WTC11 (cell line): ENCODE measurements at regions of chr10 and their contacts with region 1.

Region 1: GRCh38 chr10:125006921-125007426 is 65.1 kb downstream of the ZRANB1 start:
- DNase-seq: no peak
- ATAC-seq: no peak
- H3K4me3 Mint-ChIP-seq: no peak overlapping the region
- H3K27ac Mint-ChIP-seq: peak overlapping the region; percentile 84
- H3K4me1 Mint-ChIP-seq: peaks cover 38% of the 10 kb centered on the region
- H3K27me3 Mint-ChIP-seq: no peaks in the 10 kb centered on the region
- CTCF ChIP-seq: no peak

Region 2: DNA sequence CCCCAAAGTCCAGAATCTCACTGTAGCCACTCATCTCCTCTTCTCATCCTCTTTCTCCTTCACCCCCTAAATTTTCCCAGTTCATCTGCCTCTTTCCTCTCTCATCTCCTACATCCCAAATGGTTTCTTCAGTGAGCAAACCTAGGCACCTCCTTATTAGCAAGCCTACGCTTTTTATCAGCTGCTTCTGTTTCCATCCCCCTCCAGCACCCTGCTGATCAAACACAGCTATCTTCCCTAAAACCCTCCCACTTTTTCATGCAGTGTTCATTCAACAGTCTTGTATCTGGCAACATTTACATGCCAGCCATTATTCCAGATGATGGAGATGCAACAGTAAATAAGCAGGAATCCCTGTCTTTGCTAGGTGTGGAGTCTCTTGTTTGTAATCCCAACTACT is 208.6 kb before region 1 on chr10:
- CTCF ChIA-PET with region 1: no interaction called
- POLR2A ChIA-PET with region 1: no interaction called
- DNase-seq: no peak
- ATAC-seq: no peak
- H3K4me3 Mint-ChIP-seq: no peak overlapping the region
- H3K27ac Mint-ChIP-seq: no peak overlapping the region
- H3K4me1 Mint-ChIP-seq: peaks cover 37% of the 10 kb centered on the region
- H3K27me3 Mint-ChIP-seq: peaks cover 2% of the 10 kb centered on the region; the same call in 1 of the 2 replicates
- CTCF ChIP-seq: no peak

Region 3: GRCh38 chr10:124886195-124886594 is 120.8 kb before region 1 on chr10:
- CTCF ChIA-PET with region 1: no interaction called
- POLR2A ChIA-PET with region 1: no interaction called
- DNase-seq: no peak
- ATAC-seq: no peak
- H3K4me3 Mint-ChIP-seq: no peak overlapping the region
- H3K27ac Mint-ChIP-seq: no peak overlapping the region
- H3K4me1 Mint-ChIP-seq: no peaks in the 10 kb centered on the region
- H3K27me3 Mint-ChIP-seq: no peaks in the 10 kb centered on the region
- CTCF ChIP-seq: no peak

Region 4: GRCh38 chr10:125160856-125161706 is 154.1 kb after region 1 on chr10:
- CTCF ChIA-PET with region 1: no interaction called
- POLR2A ChIA-PET with region 1: interaction called, 10 read pairs
- DNase-seq: peak; percentile 80
- ATAC-seq: peak; percentile 74
- H3K4me3 Mint-ChIP-seq: peak overlapping the region; percentile 76
- H3K27ac Mint-ChIP-seq: peak overlapping the region; percentile 80
- H3K4me1 Mint-ChIP-seq: peaks cover 37% of the 10 kb centered on the region
- H3K27me3 Mint-ChIP-seq: no peaks in the 10 kb centered on the region
- CTCF ChIP-seq: no peak